ENCODE measurements at regions of chr12 and their contacts with region 1.

Region 1: DNA sequence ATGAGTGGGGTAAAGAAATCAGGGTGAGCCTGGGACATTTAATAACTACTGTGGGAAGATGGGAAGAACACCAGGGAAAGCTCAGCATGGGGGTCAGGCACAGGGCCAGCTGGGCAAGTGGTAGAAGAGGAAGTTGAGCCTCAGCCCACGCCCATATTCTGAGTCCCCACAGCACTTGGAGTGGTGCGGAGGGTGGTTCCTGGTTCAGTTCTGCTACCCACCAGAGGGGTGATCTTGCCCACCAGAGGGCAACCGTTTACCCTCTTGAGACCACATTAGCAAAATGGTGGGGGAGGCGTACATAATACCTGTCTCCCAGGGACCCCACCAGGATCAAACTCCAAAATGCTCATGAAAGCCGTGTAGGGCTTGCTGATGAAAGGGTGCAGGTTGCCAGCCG is 16.8 kb upstream of the ANKRD33 start:
- DNase-seq: no peak
- H3K4me3 ChIP-seq: no peak overlapping the region
- H3K4me3 Mint-ChIP-seq: no peak overlapping the region
- H3K27ac ChIP-seq: no peak overlapping the region
- H3K27ac Mint-ChIP-seq: no peak overlapping the region
- H3K4me1 ChIP-seq: no peaks in the 10 kb centered on the region
- H3K4me1 Mint-ChIP-seq: peaks cover 0 to 11% (median 7%) of the 10 kb centered on the region in 4 donors
- H3K27me3 ChIP-seq: peaks cover 16% of the 10 kb centered on the region
- H3K27me3 Mint-ChIP-seq: peaks cover 30 to 43% of the 10 kb centered on the region in 2 donors

Region 2: DNA sequence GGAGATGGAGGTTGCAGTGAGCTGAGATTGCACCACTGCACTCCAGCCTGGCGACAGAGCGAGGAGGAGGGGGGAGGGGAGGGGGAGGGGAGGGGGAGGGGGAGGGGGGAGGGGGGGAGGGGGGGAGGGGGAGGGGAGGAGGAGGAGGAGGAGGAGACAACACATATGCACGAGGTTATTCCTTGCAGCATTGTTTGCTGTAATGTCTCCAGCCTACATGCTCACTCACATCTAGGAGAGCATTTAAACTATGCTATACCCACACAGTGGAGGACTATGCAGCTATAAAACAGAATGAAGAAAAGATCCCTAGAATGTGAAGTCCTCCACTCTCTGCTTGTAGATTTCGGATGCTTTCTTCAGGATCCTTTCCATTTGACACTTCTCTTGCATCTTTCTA is 922.3 kb before region 1 on chr12:
- CTCF ChIA-PET with region 1: no interaction called
- POLR2A ChIA-PET with region 1: no interaction called
- intact Hi-C with region 1: no loop called
- DNase-seq: no peak
- H3K4me3 ChIP-seq: no peak overlapping the region
- H3K4me3 Mint-ChIP-seq: no peak overlapping the region
- H3K27ac ChIP-seq: no peak overlapping the region
- H3K27ac Mint-ChIP-seq: no peak overlapping the region
- H3K4me1 ChIP-seq: no peaks in the 10 kb centered on the region
- H3K4me1 Mint-ChIP-seq: no peaks in the 10 kb centered on the region
- H3K27me3 ChIP-seq: no peaks in the 10 kb centered on the region
- H3K27me3 Mint-ChIP-seq: no peaks in the 10 kb centered on the region

Region 3: DNA sequence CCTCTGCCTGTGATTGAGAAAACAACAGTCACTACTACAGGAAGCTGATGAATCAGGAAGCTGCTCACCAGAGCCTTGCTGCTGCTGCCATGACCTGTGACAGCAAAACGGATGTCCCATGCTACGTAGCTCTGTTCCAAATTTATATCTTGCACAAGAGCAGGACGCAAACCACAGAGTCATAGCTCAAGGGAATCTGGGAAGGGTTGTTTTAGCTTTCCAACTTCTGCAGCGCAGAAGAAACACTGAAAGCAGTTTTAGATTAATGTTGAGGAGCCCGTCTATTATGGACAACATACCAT is 14.8 kb after region 1 on chr12:
- CTCF ChIA-PET with region 1: interaction called, 12 read pairs
- POLR2A ChIA-PET with region 1: no interaction called
- intact Hi-C with region 1: no loop called
- DNase-seq: peak; percentile 41 to 56 (median 45)
- H3K4me3 ChIP-seq: no peak overlapping the region
- H3K4me3 Mint-ChIP-seq: peak overlapping the region in 6 of 8 donors; percentile 17 to 60 (median 54)
- H3K27ac ChIP-seq: no peak overlapping the region
- H3K27ac Mint-ChIP-seq: peak overlapping the region; percentile 45 to 88 (median 83)
- H3K4me1 ChIP-seq: peaks cover 14% of the 10 kb centered on the region
- H3K4me1 Mint-ChIP-seq: peaks cover 7 to 17% (median 11%) of the 10 kb centered on the region in 4 donors
- H3K27me3 ChIP-seq: no peaks in the 10 kb centered on the region
- H3K27me3 Mint-ChIP-seq: no peaks in the 10 kb centered on the region

Region 4: DNA sequence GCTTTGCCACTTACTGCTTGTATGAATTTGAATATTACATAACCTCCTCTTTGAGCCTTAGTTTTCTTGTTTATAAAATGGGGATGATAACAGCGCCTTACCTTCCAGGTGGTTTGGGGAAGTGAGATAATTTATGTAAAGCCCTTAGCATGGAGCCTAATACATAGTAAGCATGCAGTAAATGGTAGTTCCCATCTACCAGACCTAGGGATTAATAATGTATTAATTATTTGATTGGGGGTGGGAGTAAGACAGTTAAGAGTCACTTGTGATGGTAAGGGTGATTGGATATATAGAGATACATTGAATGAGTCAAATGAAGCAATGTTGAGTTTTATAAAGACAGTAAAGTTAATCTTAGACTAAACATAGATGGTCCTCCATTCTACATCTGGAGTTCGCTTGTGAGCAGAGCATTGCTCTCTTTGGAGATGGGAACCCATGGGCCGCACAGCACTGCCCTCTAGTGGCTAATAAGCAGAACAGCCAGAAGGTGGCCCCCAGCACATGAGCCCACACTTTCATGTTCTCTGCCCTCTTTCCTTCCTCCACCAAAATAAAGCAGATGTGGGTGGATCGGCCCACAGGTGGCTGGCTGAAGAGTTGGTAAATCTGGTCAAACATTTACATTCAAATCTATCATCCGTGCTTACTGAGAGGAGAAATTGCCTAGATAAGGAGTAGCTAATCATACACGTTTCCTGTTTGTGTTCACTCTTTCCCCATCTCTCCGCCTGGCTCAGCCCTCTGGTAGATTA is 109.1 kb after region 1 on chr12:
- CTCF ChIA-PET with region 1: no interaction called
- POLR2A ChIA-PET with region 1: no interaction called
- intact Hi-C with region 1: loop called (anchors 1 kb)
- DNase-seq: peak; percentile 63 to 72 (median 67)
- H3K4me3 ChIP-seq: no peak overlapping the region
- H3K4me3 Mint-ChIP-seq: peak overlapping the region in 1 of 8 donors; percentile 44
- H3K27ac ChIP-seq: no peak overlapping the region
- H3K27ac Mint-ChIP-seq: peak overlapping the region in 6 of 7 donors; percentile 10 to 75 (median 42)
- H3K4me1 ChIP-seq: peaks cover 17% of the 10 kb centered on the region
- H3K4me1 Mint-ChIP-seq: peaks cover 19 to 35% (median 26%) of the 10 kb centered on the region in 4 donors
- H3K27me3 ChIP-seq: no peaks in the 10 kb centered on the region
- H3K27me3 Mint-ChIP-seq: no peaks in the 10 kb centered on the region

Measured in CD4-positive, alpha-beta memory T cell (primary cell).